Prostate gland (tissue), 2 donors: ENCODE measurements at regions of chr20 and their contacts with region 1.

Region 1: DNA sequence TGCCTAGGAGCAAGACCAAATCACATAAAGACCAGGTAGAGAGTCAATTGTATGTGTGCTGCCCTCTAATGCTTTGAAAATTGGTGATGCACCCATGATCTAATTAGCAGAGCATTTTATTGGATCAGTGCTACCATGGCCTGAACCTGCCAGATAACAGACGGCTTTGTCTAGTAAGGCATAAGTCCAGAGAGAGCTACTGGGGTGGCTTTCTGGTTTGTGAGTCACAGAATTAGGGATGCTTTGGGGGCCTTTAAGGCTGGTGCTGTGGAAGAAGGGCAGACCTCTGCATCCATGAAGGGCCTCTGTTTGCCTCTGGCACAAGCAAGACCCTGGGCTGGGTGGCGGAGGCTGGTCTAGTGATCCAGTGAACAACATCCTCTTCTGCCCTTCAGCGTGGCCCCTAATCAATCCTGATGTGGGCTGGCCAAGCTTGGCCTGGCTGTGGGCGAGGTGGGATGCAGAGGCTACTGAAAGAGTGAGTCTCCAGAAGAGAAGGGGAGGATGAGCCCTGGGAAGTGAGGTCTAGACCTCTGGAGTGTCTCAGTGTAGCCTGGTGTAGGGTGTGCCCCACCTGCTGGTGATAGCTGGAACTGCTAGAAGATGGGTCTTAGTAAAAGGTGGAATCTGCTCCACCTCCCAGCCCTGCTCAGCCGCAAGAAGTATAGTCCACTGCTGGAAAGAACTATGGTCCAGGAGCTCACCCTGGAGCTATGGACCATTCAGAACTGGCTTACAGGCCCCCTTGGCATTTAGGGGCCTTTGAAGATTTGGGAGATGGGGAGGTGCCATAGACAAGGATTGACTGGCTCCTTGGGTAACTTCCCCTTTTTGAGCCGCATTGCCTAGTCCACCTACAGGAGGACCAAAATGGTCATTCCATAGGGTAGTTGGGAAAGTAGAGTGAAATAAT is 36.7 kb upstream of the AAR2 start:
- DNase-seq: peak; percentile 80
- H3K4me3 ChIP-seq: no peak overlapping the region
- H3K27ac ChIP-seq: no peak overlapping the region
- H3K4me1 ChIP-seq: no peaks in the 10 kb centered on the region
- H3K27me3 ChIP-seq: no peaks in the 10 kb centered on the region
- CTCF ChIP-seq: peak; percentile 76 to 90 (median 85)
- POLR2A ChIP-seq: no peak

Region 2: GRCh38 chr20:35994994-35995453 is 204.6 kb before region 1 on chr20:
- intact Hi-C with region 1: loop called (anchors 2 kb)
- DNase-seq: peak; percentile 82
- H3K4me3 ChIP-seq: no peak overlapping the region
- H3K27ac ChIP-seq: no peak overlapping the region
- H3K4me1 ChIP-seq: no peaks in the 10 kb centered on the region
- H3K27me3 ChIP-seq: no peaks in the 10 kb centered on the region
- CTCF ChIP-seq: peak; percentile 42 to 91 (median 88)
- POLR2A ChIP-seq: no peak

Region 3: GRCh38 chr20:36154700-36155628 is 44.6 kb before region 1 on chr20 and contains the start of gene EPB41L1:
- intact Hi-C with region 1: loop called (anchors 5 kb)
- DNase-seq: peak; percentile 27
- H3K4me3 ChIP-seq: peak within 1 kb of the TSS; percentile 50 to 52
- H3K27ac ChIP-seq: peak within 1 kb of the TSS; percentile 73 to 87
- H3K4me1 ChIP-seq: peaks cover 5% of the 10 kb centered on the region
- H3K27me3 ChIP-seq: no peaks in the 10 kb centered on the region
- CTCF ChIP-seq: no peak
- POLR2A ChIP-seq: no peak
- total RNA-seq, gene EPB41L1: 27.7 to 91.1 TPM

Region 4: DNA sequence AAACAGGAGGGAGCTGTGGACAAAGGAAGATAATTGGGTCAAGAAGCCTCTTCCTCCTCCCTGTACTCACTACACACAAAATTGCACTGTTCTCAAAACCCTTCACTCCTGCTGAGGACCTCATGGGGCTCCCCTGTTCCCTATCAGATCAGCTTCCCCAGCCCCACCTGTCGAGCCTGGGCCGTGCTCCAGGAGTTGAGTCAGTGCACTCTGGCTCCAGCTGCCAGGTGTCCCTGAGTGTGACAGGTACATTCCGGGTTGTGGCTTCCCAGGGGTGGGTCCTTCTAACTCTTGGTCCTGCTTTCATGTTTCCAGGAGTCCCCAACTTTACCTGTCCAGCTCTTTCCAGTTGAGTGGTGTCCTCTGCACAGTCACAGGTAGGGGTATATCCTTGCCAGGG is 414.4 kb after region 1 on chr20:
- intact Hi-C with region 1: no loop called
- DNase-seq: peak; percentile 11
- H3K4me3 ChIP-seq: no peak overlapping the region
- H3K27ac ChIP-seq: no peak overlapping the region
- H3K4me1 ChIP-seq: no peaks in the 10 kb centered on the region
- H3K27me3 ChIP-seq: no peaks in the 10 kb centered on the region
- CTCF ChIP-seq: no peak
- POLR2A ChIP-seq: no peak